ENCODE measurements at regions of chr11 and their contacts with region 1.

Region 1: GRCh38 chr11:10770626-10771254 is 19.7 kb downstream of the CTR9 start:
- DNase-seq: peak; percentile 47
- H3K4me3 Mint-ChIP-seq: no peak overlapping the region
- H3K27ac Mint-ChIP-seq: no peak overlapping the region
- H3K4me1 Mint-ChIP-seq: no peaks in the 10 kb centered on the region
- H3K27me3 Mint-ChIP-seq: no peaks in the 10 kb centered on the region

Region 2: GRCh38 chr11:10750838-10751580 is 19.7 kb before region 1 on chr11 and contains the start of gene CTR9:
- CTCF ChIA-PET with region 1: interaction called, 12 read pairs
- DNase-seq: peak; percentile 96
- H3K4me3 Mint-ChIP-seq: peak within 1 kb of the TSS; percentile 96
- H3K27ac Mint-ChIP-seq: peak within 1 kb of the TSS; percentile 93
- H3K4me1 Mint-ChIP-seq: peaks cover 35% of the 10 kb centered on the region
- H3K27me3 Mint-ChIP-seq: no peaks in the 10 kb centered on the region

Region 3: GRCh38 chr11:10758957-10759356 is 11.8 kb before region 1 on chr11:
- CTCF ChIA-PET with region 1: interaction called, 12 read pairs
- DNase-seq: no peak
- H3K4me3 Mint-ChIP-seq: no peak overlapping the region
- H3K27ac Mint-ChIP-seq: no peak overlapping the region
- H3K4me1 Mint-ChIP-seq: peaks cover 8% of the 10 kb centered on the region
- H3K27me3 Mint-ChIP-seq: no peaks in the 10 kb centered on the region

Region 4: GRCh38 chr11:11022125-11022730 is 251.5 kb after region 1 on chr11:
- CTCF ChIA-PET with region 1: interaction called, 13 read pairs
- DNase-seq: peak; percentile 31
- H3K4me3 Mint-ChIP-seq: no peak overlapping the region
- H3K27ac Mint-ChIP-seq: no peak overlapping the region
- H3K4me1 Mint-ChIP-seq: no peaks in the 10 kb centered on the region
- H3K27me3 Mint-ChIP-seq: no peaks in the 10 kb centered on the region